Activated CD4-positive, alpha-beta T cell treated with anti-CD3 and anti-CD28 coated beads, Interleukin-2, amount 10 ng/mL, durations not matched to agents 7 days and 5 days (primary cell): ENCODE measurements at regions of chr9 and their contacts with region 1.

Region 1: GRCh38 chr9:214648-215493 is at the start of gene DOCK8:
- DNase-seq: peak; percentile 73
- H3K4me3 Mint-ChIP-seq: peak within 1 kb of the TSS; percentile 84
- H3K27ac Mint-ChIP-seq: peak within 1 kb of the TSS; percentile 89
- H3K4me1 Mint-ChIP-seq: peaks cover 30% of the 10 kb centered on the region
- H3K27me3 Mint-ChIP-seq: peaks cover 2% of the 10 kb centered on the region
- total RNA-seq, gene DOCK8: 270 to 283 TPM

Region 2: DNA sequence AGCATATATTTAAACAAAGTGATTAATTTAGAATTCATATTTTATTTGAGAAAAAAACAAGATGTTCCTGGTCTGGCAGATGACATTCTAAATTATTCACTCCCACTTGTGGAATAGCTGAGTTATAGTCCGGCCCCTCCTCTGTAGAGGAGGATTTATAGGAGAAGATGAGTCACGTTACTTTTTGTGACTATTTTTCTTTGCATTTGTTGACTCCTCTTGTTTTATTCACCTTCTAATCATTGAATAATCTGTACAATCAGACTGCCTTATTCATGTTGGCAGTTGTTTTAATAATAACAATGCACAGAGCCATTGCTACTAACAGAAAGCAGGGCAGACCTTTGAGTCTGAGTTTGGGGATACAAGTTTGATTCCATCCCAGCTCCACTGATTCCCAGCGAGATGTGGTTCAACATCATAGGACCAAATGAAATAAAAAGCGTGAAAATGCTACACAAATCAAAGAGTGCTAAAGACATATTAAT is 23.0 kb after region 1 on chr9:
- CTCF ChIA-PET with region 1: interaction called, 13 read pairs
- POLR2A ChIA-PET with region 1: no interaction called
- DNase-seq: no peak
- H3K4me3 Mint-ChIP-seq: peak overlapping the region; percentile 20
- H3K27ac Mint-ChIP-seq: peak overlapping the region; percentile 78
- H3K4me1 Mint-ChIP-seq: peaks cover 61% of the 10 kb centered on the region
- H3K27me3 Mint-ChIP-seq: peaks cover 4% of the 10 kb centered on the region

Region 3: DNA sequence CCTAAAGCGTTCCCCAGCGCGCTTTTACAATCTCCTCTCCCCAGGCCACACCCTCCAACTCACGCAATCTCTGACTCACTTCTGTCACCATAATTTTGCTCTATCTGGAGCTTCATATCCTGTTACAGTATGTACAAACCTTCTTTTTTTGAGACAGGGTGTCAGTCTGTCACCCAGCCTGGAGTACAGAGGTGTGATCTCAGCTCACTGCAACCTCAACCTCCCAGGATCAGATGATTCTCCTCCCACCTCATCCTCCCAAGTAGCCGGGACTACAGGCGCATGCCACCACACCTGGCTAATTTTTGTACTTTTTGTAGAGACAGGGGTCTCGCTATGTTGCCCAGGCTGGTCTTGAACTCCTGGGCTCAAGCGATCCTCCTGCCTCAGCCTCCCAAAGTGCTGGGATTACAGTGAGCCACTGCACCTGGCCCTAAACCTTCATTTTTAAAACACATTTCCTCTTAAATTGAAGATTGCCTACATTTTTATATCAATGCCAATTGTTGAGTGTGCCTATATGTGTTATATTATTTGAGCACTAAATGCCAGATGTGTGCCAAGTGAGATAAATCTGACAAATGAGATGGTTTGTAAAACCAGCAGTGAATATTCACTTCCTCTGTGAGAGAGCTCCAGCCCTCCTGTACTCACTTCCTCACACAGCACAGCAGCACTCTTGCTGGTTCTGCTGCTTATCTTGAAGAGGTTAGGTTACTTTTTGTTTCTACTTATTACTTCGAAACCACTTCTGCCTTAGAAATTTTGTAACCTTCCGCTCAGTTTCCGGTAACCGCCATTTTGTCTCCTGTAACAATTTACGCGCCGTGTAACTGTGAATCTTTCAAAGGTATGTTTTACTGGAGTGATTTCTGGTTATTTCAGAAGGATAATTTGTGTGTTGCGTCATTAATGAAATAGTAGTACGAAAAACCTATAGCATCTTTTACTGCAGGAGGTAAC is 57.7 kb after region 1 on chr9:
- CTCF ChIA-PET with region 1: interaction called, 15 read pairs
- POLR2A ChIA-PET with region 1: interaction called, 11 read pairs
- DNase-seq: peak; percentile 87
- H3K4me3 Mint-ChIP-seq: peak overlapping the region; percentile 98
- H3K27ac Mint-ChIP-seq: peak overlapping the region; percentile 100
- H3K4me1 Mint-ChIP-seq: peaks cover 62% of the 10 kb centered on the region
- H3K27me3 Mint-ChIP-seq: no peaks in the 10 kb centered on the region

Region 4: DNA sequence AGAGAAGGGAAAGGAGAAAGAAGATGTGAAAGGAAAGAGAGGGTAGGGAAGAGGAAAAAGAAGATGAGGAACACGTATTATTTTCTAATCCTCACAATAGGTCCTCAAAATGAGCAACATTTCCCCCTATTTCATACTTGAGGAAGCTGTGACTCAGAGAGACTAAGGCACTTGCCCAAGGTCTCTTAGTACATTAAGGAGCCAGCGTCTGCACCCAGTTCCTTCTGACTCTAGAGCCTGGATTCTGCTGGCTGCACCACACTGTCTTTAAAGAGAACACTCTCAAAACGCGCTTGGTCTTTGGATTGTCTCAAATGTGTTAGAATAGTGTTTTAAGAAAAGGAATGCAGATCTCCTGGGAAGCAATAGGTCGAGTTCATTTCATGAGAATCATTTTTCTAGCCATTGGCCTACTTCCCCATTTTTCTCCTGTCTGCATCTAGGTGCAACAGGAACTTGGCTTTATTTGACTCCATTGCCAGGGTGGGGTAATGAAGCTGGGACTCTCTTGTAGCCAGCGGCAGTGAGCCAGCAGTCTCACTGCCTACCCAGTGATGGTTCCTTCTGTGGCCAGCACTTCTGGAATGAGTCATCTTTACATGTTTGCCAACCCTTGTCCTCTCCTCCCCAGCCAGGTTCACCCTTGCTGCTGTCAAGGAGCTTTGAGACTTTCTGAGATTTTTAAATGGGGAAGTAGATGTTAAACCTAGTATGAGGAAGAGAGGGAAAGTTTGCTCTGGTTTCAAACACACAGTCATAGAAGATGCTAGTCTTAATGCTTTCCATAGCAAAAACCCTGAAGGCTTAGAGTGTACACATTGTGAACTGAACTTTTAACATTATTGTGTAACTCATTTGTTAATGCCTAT is 82.5 kb after region 1 on chr9:
- CTCF ChIA-PET with region 1: interaction called, 10 read pairs
- POLR2A ChIA-PET with region 1: no interaction called
- DNase-seq: no peak
- H3K4me3 Mint-ChIP-seq: no peak overlapping the region
- H3K27ac Mint-ChIP-seq: no peak overlapping the region
- H3K4me1 Mint-ChIP-seq: peaks cover 43% of the 10 kb centered on the region
- H3K27me3 Mint-ChIP-seq: no peaks in the 10 kb centered on the region